Sigmoid colon (tissue), 7 donors: ENCODE measurements at regions of chr4 and their contacts with region 1.

Region 1: DNA sequence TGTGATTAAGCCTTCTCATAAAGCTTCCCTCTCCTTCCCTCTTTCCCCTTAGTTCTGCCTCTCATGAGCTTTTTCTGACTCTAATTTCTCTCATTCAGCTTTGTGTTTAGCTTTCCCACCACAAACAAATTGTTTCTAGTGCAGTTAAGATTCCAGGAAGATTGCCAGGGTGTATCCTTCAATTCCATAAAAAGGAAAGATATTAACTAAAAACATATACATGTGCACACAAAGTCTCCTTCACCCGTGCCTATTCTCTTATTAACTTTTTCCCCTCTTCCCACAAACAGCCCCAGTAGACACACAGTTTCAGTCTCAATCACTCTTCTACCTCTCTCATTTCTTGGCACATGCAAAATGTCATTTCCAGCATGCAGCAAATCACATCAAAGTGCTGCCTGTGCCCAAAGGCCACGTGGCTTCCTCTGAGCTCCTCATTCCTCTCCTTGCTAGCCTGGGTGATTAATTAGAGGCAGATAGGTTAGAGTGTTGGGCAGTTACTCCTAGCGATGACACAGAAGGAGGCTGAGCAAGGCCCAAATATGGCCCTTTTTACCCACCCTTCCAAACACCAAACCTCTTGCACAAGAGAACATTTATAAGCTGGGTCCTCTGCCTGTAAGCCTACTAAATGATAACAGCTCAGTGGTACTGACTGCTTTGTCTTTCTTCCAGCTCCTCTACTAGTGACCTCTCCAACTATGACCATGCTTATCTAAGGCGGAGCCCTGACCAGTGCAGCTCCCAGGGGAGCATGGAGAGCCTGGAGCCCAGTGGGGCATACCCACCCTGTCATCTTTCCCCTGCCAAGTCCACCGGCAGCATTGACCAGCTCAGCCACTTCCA is 159.6 kb downstream of the SOWAHB start:
- DNase-seq: peak; percentile 76
- H3K4me3 ChIP-seq: no peak overlapping the region
- H3K27ac ChIP-seq: peak overlapping the region; percentile 82 to 89 (median 88)
- H3K4me1 ChIP-seq: peaks cover 0 to 73% (median 50%) of the 10 kb centered on the region in 4 donors
- H3K27me3 ChIP-seq: no peaks in the 10 kb centered on the region
- CTCF ChIP-seq: no peak
- EP300 ChIP-seq: peak in 3 of 4 donors; percentile 14 to 67 (median 34)
- POLR2A ChIP-seq: no peak

Region 2: GRCh38 chr4:76526585-76526990 is 211.7 kb before region 1 on chr4:
- intact Hi-C with region 1: loop called (anchors 5 kb)
- DNase-seq: no peak
- H3K4me3 ChIP-seq: no peak overlapping the region
- H3K27ac ChIP-seq: peak overlapping the region in 3 of 4 donors; percentile 26 to 64 (median 39)
- H3K4me1 ChIP-seq: peaks cover 0 to 13% (median 2%) of the 10 kb centered on the region in 4 donors
- H3K27me3 ChIP-seq: no peaks in the 10 kb centered on the region
- CTCF ChIP-seq: no peak
- EP300 ChIP-seq: no peak
- POLR2A ChIP-seq: no peak

Region 3: DNA sequence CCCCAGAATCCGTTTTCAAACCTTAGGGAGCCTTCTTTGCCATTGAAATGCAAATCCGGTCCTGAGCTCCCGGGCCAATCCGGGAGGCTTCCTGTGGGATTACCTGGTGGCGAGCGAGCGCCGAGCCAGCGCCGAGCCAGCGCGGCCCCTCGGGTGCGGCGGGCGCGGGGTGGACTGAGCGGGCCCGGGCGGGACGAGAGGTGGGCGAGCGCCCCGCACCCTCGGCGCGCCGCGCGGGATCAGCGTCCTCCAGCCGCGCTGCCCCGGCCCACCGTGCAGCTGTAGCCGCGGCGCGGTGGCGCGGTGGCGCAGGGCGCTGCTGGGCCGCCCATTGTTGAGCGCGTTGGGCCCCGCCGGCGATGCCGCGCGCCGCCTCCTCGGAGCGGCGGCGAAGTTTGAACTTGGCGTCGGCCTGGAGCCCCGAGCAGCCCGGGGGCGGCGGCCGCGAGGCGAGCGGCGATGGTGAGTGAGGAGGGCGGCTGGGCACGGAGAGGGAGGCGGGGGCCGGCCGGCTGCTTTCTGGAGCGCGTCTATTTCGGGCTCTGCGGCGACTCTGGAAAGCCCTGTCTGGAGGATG is 49.0 kb before region 1 on chr4:
- intact Hi-C with region 1: loop called (anchors 5 kb)
- DNase-seq: no peak
- H3K4me3 ChIP-seq: peak overlapping the region; percentile 55 to 74 (median 64)
- H3K27ac ChIP-seq: peak overlapping the region; percentile 80 to 89 (median 82)
- H3K4me1 ChIP-seq: peaks cover 0 to 38% (median 23%) of the 10 kb centered on the region in 4 donors
- H3K27me3 ChIP-seq: no peaks in the 10 kb centered on the region
- CTCF ChIP-seq: no peak
- EP300 ChIP-seq: no peak
- POLR2A ChIP-seq: no peak

Region 4: GRCh38 chr4:76702440-76703122 is 35.7 kb before region 1 on chr4:
- intact Hi-C with region 1: no loop called
- DNase-seq: no peak
- H3K4me3 ChIP-seq: no peak overlapping the region
- H3K27ac ChIP-seq: peak overlapping the region; percentile 38 to 73 (median 58)
- H3K4me1 ChIP-seq: peaks cover 0 to 60% (median 44%) of the 10 kb centered on the region in 4 donors
- H3K27me3 ChIP-seq: no peaks in the 10 kb centered on the region
- CTCF ChIP-seq: no peak
- EP300 ChIP-seq: no peak
- POLR2A ChIP-seq: no peak

Region 5: GRCh38 chr4:76905531-76905930 is 167.2 kb after region 1 on chr4:
- intact Hi-C with region 1: no loop called
- DNase-seq: no peak
- H3K4me3 ChIP-seq: no peak overlapping the region
- H3K27ac ChIP-seq: no peak overlapping the region
- H3K4me1 ChIP-seq: peaks cover 0 to 9% (median 0%) of the 10 kb centered on the region in 4 donors
- H3K27me3 ChIP-seq: no peaks in the 10 kb centered on the region
- CTCF ChIP-seq: no peak
- EP300 ChIP-seq: no peak
- POLR2A ChIP-seq: no peak